ENCODE measurements at regions of chr10 and their contacts with region 1.

Region 1: DNA sequence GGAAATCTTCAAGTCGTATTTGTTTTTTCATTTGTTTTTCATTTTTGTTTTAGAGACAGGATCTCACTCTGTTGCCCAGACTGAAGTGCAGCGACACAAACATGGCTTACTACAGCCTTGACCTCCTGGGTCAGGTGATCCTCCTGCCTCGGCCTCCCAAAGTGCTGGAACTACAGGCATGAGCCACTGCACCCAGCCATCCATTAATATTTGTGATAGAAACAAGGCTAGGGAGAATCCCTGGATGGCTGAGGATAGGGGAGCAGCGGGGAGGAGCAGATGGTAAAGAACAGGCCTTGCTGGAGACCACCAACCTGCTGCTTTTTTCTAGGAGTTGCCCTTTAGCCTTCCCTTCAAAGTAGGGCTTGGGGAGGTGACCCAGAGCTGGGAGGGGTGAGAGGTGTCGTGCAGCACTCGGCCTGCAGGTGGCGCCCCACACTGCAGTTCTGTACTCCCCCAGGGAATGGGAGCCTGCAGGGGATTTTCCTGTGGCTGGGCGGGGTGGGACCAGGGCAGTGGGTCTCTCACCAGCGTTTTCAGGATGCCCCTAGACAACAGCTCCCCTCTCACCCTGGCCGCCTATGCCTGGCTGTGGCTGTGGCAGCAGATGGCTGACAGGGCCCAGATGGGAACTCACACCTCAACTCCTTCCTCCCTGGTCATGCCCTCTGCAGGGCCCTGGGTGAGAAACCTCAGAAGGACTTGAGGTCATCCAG is 12.6 kb upstream of the CDH23 start:
- DNase-seq: peak; percentile 92
- H3K4me3 ChIP-seq: no peak overlapping the region
- H3K27ac ChIP-seq: no peak overlapping the region
- H3K4me1 ChIP-seq: peaks cover 0 to 15% (median 5%) of the 10 kb centered on the region in 6 donors
- H3K27me3 ChIP-seq: peaks cover 0 to 4% (median 0%) of the 10 kb centered on the region in 7 donors
- CTCF ChIP-seq: peak; percentile 49 to 95 (median 91)
- POLR2A ChIP-seq: no peak

Region 2: DNA sequence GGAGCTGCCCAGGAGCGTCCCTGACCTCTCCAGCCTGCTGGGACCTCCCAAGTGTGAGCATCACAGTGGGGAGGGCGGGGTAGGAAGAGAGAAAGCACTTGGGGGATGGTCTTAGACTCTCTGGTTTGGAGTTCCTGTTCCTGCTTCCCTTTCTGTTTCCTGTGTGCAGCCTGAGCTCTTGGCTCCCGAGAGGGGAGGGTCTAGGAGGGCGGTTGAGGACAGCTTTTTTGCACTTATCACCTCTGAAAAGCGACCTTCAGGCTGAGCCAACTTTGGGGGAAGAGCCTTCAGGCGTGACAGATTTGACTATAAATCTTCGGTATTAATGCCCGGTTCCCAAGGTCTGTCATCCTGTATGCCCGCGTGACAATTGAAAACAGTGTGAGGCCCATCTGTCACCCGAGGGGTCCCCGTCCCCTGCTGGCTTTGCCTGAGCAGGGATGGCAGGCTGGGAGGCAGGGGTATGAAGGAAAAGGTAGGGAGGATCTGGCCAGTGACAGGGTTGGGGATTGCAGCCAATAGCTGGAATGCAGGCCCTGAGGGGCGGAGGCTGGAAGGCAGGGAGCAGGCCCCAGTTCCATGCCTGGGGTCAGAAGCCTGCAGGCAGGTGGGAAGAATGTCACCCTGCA is 91.2 kb after region 1 on chr10:
- intact Hi-C with region 1: no loop called
- DNase-seq: peak; percentile 74
- H3K4me3 ChIP-seq: peak overlapping the region in 1 of 8 donors; percentile 44
- H3K27ac ChIP-seq: peak overlapping the region in 5 of 8 donors; percentile 57 to 74 (median 68)
- H3K4me1 ChIP-seq: peaks cover 18 to 61% (median 39%) of the 10 kb centered on the region in 6 donors
- H3K27me3 ChIP-seq: no peaks in the 10 kb centered on the region
- CTCF ChIP-seq: no peak
- POLR2A ChIP-seq: no peak

Region 3: DNA sequence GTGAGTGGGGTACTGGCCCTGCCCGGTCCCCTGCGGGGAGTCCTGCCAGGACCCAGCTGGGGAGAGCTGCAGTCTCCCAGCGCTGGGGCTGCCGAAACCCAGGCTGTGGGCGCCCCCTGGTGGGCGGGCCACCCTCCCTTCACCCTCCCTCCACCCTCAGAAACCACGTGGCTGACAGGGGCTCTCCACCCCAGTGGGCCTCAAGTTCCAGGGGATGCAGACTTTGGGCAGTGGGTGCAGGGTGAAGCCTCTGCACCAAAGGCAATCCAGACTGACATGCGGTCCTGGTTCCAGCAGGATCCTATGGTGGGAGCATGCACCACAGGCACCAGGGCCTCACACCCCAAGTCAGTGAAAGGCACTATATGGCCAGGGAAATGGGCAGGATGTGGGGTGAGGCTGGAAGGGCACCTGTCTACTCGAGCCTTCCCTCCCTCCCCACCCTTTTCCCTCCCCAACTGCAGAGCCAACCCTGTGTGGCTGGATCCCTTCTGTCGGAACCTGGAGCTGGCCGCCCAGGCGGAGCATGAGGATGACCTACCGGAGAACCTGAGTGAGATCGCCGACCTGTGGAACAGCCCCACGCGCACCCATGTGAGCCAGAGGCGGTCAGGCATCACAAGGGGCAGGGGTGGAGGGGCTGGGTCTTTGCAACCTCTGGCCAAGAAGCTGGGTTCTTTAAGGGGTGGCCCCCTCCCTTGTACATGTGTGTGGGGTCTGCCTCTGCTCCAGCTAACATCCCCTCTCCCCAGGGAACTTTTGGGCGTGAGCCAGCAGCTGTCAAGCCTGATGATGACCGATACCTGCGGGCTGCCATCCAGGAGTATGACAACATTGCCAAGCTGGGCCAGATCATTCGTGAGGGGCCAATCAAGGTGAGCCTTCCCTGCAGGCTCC is 428.1 kb after region 1 on chr10:
- intact Hi-C with region 1: loop called (anchors 10 kb)
- DNase-seq: peak; percentile 96
- H3K4me3 ChIP-seq: peak overlapping the region in 1 of 8 donors; percentile 4
- H3K27ac ChIP-seq: peak overlapping the region in 3 of 8 donors; percentile 7 to 92 (median 32)
- H3K4me1 ChIP-seq: peaks cover 2 to 61% (median 41%) of the 10 kb centered on the region in 6 donors
- H3K27me3 ChIP-seq: no peaks in the 10 kb centered on the region
- CTCF ChIP-seq: peak; percentile 93 to 98 (median 96)
- POLR2A ChIP-seq: no peak

Region 4: DNA sequence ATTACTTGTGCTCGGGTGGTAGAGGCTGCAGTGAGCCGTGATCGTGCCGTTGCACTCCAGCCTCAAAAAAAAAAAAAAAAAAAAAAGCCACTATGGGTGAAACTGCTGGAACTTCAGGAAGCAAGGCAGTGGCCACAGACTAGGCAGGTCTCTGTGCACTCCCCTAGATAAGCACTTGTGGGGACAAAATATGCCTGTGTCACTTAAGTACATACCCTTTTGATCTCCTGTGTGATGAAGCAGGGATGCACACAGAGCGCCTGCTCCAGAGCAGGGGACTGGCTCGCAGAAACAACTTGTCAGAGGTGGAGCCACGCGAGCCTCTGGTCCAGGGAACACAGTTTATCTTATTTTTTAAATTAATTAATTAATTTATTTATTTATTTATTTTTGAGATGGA is 509.8 kb after region 1 on chr10:
- intact Hi-C with region 1: loop called (anchors 10 kb)
- DNase-seq: peak; percentile 44
- H3K4me3 ChIP-seq: no peak overlapping the region
- H3K27ac ChIP-seq: no peak overlapping the region
- H3K4me1 ChIP-seq: peaks cover 13 to 53% (median 28%) of the 10 kb centered on the region in 6 donors
- H3K27me3 ChIP-seq: no peaks in the 10 kb centered on the region
- CTCF ChIP-seq: no peak
- POLR2A ChIP-seq: no peak